Activated T-helper 2 cell treated with anti-CD3 and anti-CD28 coated beads, Interferon-gamma antibody, Interleukin-2, Interleukin-4, amounts not matched to agents 10 μg/mL and 5 μg/mL and 100 μg/mL, durations not matched to agents 14 hours and 24 hours and 36 hours (primary cell): ENCODE measurements at regions of chr17 and their contacts with region 1.

Region 1: GRCh38 chr17:56960596-56961538 is at the start of gene COIL:
- DNase-seq: peak; percentile 89
- H3K4me3 Mint-ChIP-seq: peak within 1 kb of the TSS; percentile 81
- H3K27ac Mint-ChIP-seq: peak within 1 kb of the TSS; percentile 80
- H3K4me1 Mint-ChIP-seq: peaks cover 16% of the 10 kb centered on the region
- H3K27me3 Mint-ChIP-seq: peaks cover 2% of the 10 kb centered on the region
- total RNA-seq, gene COIL: 20.3 and 23.1 TPM in 2 replicates

Region 2: GRCh38 chr17:56779898-56780733 is 180.8 kb before region 1 on chr17:
- intact Hi-C with region 1: no loop called
- DNase-seq: peak; percentile 88
- H3K4me3 Mint-ChIP-seq: peak overlapping the region; percentile 89
- H3K27ac Mint-ChIP-seq: peak overlapping the region; percentile 92
- H3K4me1 Mint-ChIP-seq: peaks cover 27% of the 10 kb centered on the region
- H3K27me3 Mint-ChIP-seq: no peaks in the 10 kb centered on the region

Region 3: DNA sequence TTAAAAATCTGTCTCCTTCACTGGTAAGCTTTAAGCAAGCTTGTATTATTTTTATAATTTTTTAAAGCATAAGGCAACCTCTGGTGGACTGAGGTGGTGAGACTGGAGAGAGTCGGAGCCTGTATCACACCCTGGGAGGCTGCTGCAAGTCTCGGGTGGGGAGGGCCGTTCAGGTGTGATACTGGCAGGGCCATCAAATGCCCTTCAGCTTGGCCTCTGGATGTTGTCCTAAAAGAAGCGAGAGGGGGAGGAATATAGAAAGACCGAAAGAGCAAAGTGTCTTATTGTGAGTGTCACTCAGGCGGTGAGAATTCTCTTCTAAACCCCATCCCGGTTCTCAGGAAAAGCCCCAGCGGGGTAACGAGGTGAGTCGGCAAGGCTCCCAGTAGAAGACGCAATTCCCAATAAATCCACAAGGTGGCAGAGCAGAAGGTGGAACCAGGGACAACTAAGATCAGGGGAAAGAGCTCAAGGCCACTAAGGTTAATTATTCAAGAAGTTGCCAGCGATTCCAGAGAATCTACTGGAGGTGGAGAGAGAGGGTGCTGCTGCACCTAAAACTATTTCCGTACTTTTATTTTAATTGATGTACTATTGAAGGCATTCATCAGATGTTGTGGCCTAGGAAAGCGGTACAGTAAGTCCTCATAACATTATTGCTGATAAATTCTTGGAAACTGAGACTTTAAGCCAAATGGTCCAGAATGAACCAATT is 141.3 kb before region 1 on chr17:
- intact Hi-C with region 1: loop called (anchors 1 kb)
- DNase-seq: peak; percentile 63
- H3K4me3 Mint-ChIP-seq: no peak overlapping the region
- H3K27ac Mint-ChIP-seq: no peak overlapping the region
- H3K4me1 Mint-ChIP-seq: peaks cover 20% of the 10 kb centered on the region
- H3K27me3 Mint-ChIP-seq: no peaks in the 10 kb centered on the region

Region 4: DNA sequence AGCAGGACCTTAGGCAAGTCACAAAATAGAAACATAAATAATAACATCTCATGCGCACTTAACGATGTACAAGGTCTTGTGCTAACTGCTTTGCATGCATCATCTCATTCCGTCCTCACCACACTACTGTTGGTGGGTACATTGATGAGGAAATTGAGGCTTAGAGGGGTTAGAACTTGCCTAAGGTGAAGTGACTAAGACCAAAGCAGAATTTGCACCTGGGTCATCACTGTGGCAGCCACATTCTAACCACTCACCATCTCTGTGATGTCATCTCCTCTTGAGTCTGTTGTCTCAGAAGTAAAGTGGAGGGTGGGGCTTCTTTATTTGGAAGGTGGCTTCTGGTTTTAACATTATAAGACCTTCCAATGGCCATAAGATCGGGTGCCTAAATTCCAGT is 26.6 kb before region 1 on chr17:
- intact Hi-C with region 1: no loop called
- DNase-seq: no peak
- H3K4me3 Mint-ChIP-seq: no peak overlapping the region
- H3K27ac Mint-ChIP-seq: peak overlapping the region; percentile 62
- H3K4me1 Mint-ChIP-seq: peaks cover 27% of the 10 kb centered on the region
- H3K27me3 Mint-ChIP-seq: no peaks in the 10 kb centered on the region

Region 5: GRCh38 chr17:56977673-56978395 is 17.0 kb after region 1 on chr17 and contains the start of gene SCPEP1:
- intact Hi-C with region 1: loop called (anchors 2 kb)
- DNase-seq: peak; percentile 75
- H3K4me3 Mint-ChIP-seq: peak within 1 kb of the TSS; percentile 81
- H3K27ac Mint-ChIP-seq: peak within 1 kb of the TSS; percentile 79
- H3K4me1 Mint-ChIP-seq: peaks cover 21% of the 10 kb centered on the region
- H3K27me3 Mint-ChIP-seq: peaks cover 18% of the 10 kb centered on the region
- total RNA-seq, gene SCPEP1: 15.8 and 18.1 TPM in 2 replicates

Region 6: GRCh38 chr17:57084802-57085447 is 124.1 kb after region 1 on chr17 and contains the start of gene AKAP1:
- intact Hi-C with region 1: loop called (anchors 5 kb)
- DNase-seq: peak; percentile 95
- H3K4me3 Mint-ChIP-seq: peak within 1 kb of the TSS; percentile 86
- H3K27ac Mint-ChIP-seq: peak within 1 kb of the TSS; percentile 87
- H3K4me1 Mint-ChIP-seq: peaks cover 41% of the 10 kb centered on the region
- H3K27me3 Mint-ChIP-seq: peaks cover 11% of the 10 kb centered on the region
- total RNA-seq, gene AKAP1: 38.7 and 45.0 TPM in 2 replicates